ENCODE measurements at regions of chr11 and their contacts with region 1.

Region 1: DNA sequence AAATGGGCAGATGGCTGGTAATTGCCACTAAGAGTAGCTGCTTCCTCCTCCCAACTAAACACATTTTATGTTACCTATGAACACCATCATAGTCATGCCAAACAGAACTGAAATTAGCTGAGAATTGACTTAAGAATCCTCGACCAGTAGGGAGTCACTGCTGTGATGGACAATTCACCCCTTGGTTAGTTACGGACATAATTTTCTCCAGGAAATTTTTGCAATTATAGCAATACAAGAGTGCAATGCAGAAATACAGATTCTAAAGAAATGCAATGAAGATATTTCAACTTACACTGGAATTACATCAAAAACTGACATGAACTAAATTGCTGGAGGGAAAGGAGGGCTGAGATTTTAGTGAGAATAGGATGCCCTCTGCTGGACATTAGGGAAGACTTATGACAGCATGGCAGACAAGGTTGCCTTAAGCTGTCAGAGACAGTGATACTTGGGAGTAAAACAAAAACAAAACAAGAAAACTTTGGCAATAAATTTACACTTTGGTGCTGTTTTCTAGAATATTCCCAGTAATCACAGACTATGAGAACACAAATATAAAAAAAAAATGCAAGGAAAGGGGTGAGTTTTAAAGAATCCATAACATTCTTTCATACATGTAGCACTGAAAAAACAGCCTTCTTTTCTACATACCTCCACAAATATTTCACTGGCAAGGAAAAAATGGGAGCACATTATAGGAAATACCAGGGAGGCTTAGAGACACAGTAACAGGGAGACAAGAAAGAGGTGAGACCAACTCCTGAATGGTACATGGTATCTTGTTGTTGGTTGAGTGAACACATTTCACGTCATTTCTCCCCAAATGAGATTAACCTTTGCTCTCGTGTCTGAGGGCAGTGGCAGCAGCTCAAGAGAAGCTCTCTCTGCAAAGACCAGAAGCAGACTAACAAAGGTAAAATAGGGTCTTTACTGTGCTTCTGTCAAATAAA is 11.2 kb upstream of the PPP2R1B start:
- DNase-seq: peak; percentile 82
- ATAC-seq: peak; percentile 85
- H3K4me3 ChIP-seq: peak overlapping the region; percentile 17 to 62 (median 44); a peak in 4 of 6 replicates
- H3K27ac ChIP-seq: peak overlapping the region; percentile 85
- H3K4me1 ChIP-seq: peaks cover 63% of the 10 kb centered on the region
- H3K27me3 ChIP-seq: no peaks in the 10 kb centered on the region
- CTCF ChIP-seq: peak; percentile 86
- EP300 ChIP-seq: peak in 1 of 2 experiments; percentile 47; a peak in 2 of 4 replicates
- POLR2A ChIP-seq: 0 out of 4 replicates have a peak, but pooled peaks of 1 of the 2 experiments have one; percentile 39
- RAD21 ChIP-seq: peak; percentile 69

Region 2: DNA sequence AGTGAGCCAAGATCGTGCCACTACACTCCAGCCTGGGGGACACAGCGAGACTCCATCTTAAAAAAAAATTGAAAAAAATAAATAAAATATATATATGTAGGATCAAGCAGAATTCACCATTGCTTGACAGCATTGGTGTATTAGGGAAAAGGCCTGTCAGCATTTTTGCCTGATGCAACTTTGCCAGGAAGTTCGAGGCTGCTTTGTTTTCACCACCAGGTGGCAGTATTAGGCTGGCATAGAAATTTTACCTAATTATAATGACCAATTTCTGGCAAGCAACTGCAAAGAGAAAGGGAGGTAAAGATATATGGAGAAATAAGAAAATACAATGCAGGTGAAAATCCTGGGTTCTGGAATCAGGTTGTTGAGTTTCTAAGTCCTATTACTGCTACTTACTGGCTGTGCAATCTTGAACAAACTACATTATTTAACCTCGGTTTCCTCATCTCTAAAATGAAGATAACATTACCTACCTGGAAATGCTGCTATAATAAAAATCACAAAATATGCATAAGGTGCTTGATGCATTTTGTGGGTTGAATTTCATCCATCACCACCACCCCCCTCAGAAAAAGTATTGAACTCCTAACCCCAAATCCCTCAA is 212.2 kb before region 1 on chr11:
- CTCF ChIA-PET with region 1: no interaction called
- POLR2A ChIA-PET with region 1: no interaction called
- in situ Hi-C with region 1: no loop called
- intact Hi-C with region 1: loop called (anchors 1 kb)
- DNase-seq: peak; percentile 39
- ATAC-seq: 0 out of 3 replicates have a peak, but pooled peaks have one; percentile 14
- H3K4me3 ChIP-seq: no peak overlapping the region
- H3K27ac ChIP-seq: no peak overlapping the region
- H3K4me1 ChIP-seq: peaks cover 62% of the 10 kb centered on the region
- H3K27me3 ChIP-seq: no peaks in the 10 kb centered on the region
- CTCF ChIP-seq: peak; percentile 75
- EP300 ChIP-seq: no peak
- POLR2A ChIP-seq: no peak
- RAD21 ChIP-seq: peak; percentile 49; the same call in 1 of the 2 replicates

Region 3: GRCh38 chr11:111688028-111688427 is 89.3 kb before region 1 on chr11:
- CTCF ChIA-PET with region 1: no interaction called
- POLR2A ChIA-PET with region 1: no interaction called
- in situ Hi-C with region 1: no loop called
- intact Hi-C with region 1: no loop called
- DNase-seq: no peak
- ATAC-seq: no peak
- H3K4me3 ChIP-seq: no peak overlapping the region
- H3K27ac ChIP-seq: no peak overlapping the region
- H3K4me1 ChIP-seq: peaks cover 15% of the 10 kb centered on the region
- H3K27me3 ChIP-seq: no peaks in the 10 kb centered on the region; a peak in 1 of 5 replicates
- CTCF ChIP-seq: no peak
- EP300 ChIP-seq: no peak
- POLR2A ChIP-seq: no peak
- RAD21 ChIP-seq: no peak

Region 4: GRCh38 chr11:111745719-111746504 is 31.5 kb before region 1 on chr11:
- CTCF ChIA-PET with region 1: no interaction called
- POLR2A ChIA-PET with region 1: no interaction called
- in situ Hi-C with region 1: no loop called
- intact Hi-C with region 1: no loop called
- DNase-seq: no peak
- ATAC-seq: no peak
- H3K4me3 ChIP-seq: no peak overlapping the region
- H3K27ac ChIP-seq: no peak overlapping the region
- H3K4me1 ChIP-seq: no peaks in the 10 kb centered on the region
- H3K27me3 ChIP-seq: no peaks in the 10 kb centered on the region
- CTCF ChIP-seq: no peak
- EP300 ChIP-seq: no peak
- POLR2A ChIP-seq: no peak
- RAD21 ChIP-seq: no peak

Region 5: DNA sequence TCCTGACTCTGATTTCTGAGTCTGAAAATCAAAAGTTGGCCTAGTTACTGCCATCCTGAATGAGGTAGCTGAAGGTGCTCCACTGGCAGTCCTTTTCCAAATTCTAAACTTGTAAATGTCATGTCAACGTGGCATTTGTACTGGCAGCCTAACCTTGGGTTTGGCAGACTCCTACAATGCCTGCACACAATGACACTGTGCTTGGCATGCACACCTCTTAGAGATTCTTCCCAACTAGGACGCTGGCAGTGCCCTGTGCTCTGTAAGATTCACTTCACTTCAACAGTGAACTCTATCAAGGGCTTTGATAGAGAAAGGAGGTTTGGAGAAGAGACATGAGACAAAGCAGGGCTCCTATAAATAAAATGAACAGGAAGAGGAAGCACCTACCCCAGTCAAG is 10.7 kb after region 1 on chr11:
- CTCF ChIA-PET with region 1: no interaction called
- POLR2A ChIA-PET with region 1: interaction called, 32 read pairs
- in situ Hi-C with region 1: no loop called
- intact Hi-C with region 1: no loop called
- DNase-seq: no peak
- ATAC-seq: no peak
- H3K4me3 ChIP-seq: no peak overlapping the region
- H3K27ac ChIP-seq: peak overlapping the region; percentile 10
- H3K4me1 ChIP-seq: peaks cover 87% of the 10 kb centered on the region
- H3K27me3 ChIP-seq: no peaks in the 10 kb centered on the region
- CTCF ChIP-seq: no peak
- EP300 ChIP-seq: no peak
- POLR2A ChIP-seq: no peak
- RAD21 ChIP-seq: no peak

Region 6: GRCh38 chr11:112024773-112025678 is 247.7 kb after region 1 on chr11 and contains the start of gene DLAT:
- CTCF ChIA-PET with region 1: no interaction called
- POLR2A ChIA-PET with region 1: no interaction called
- in situ Hi-C with region 1: no loop called
- intact Hi-C with region 1: no loop called
- DNase-seq: peak; percentile 85
- ATAC-seq: peak; percentile 88
- H3K4me3 ChIP-seq: peak within 1 kb of the TSS; percentile 82 to 90 (median 87)
- H3K27ac ChIP-seq: peak within 1 kb of the TSS; percentile 90
- H3K4me1 ChIP-seq: peaks cover 17% of the 10 kb centered on the region
- H3K27me3 ChIP-seq: no peaks in the 10 kb centered on the region; a peak in 2 of 5 replicates
- CTCF ChIP-seq: 0 out of 2 replicates have a peak, but pooled peaks have one; percentile 13
- EP300 ChIP-seq: no peak
- POLR2A ChIP-seq: peak; percentile 57 to 59
- RAD21 ChIP-seq: no peak; the same call in 1 of the 2 replicates
- total RNA-seq, gene DLAT: 62.2 and 73.2 TPM in 2 replicates